ENCODE measurements at regions of chrX and their contacts with region 1.

Region 1: GRCh38 chrX:71128915-71129765 is 10.7 kb downstream of the MED12 start:
- DNase-seq: peak; percentile 79
- H3K4me3 ChIP-seq: peak overlapping the region in 1 of 2 experiments; percentile 29; a peak in 1 of 4 replicates
- H3K27ac ChIP-seq: peak overlapping the region in 1 of 2 experiments; percentile 37; a peak in 2 of 4 replicates
- H3K4me1 ChIP-seq: peaks cover 0 to 4% of the 10 kb centered on the region in 2 experiments; a peak in 1 of 4 replicates
- H3K27me3 ChIP-seq: peaks cover 5% of the 10 kb centered on the region; the same call in 1 of the 2 replicates
- CTCF ChIP-seq: peak; percentile 90
- EP300 ChIP-seq: no peak
- RAD21 ChIP-seq: peak; percentile 77

Region 2: DNA sequence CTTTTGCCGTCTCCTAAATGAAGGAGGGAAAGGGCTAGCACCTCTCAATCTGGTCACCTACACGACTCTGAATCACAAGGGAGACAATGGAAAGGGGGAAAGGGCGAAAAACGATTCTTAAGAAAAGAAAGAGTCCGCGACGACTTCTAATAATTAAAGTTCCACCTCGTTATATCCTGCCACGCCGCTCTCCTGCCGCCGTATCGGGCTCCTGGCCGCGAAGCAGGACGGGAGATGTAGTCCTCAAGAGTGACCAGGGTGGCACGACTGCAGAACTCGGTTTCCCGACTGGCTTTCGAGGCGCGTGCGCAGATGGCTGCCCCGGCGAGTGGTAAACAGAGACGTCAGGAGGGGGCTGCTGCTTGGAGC is 33.6 kb before region 1 on chrX and contains the start of gene FOXO4:
- CTCF ChIA-PET with region 1: interaction called, 30 read pairs
- POLR2A ChIA-PET with region 1: no interaction called
- DNase-seq: peak; percentile 91
- H3K4me3 ChIP-seq: peak within 1 kb of the TSS; percentile 69 to 77
- H3K27ac ChIP-seq: peak within 1 kb of the TSS in 1 of 2 experiments; percentile 17; a peak in 1 of 4 replicates
- H3K4me1 ChIP-seq: peaks cover 0 to 16% of the 10 kb centered on the region in 2 experiments; a peak in 1 of 4 replicates
- H3K27me3 ChIP-seq: peaks cover 5% of the 10 kb centered on the region; the same call in 1 of the 2 replicates
- CTCF ChIP-seq: no peak
- EP300 ChIP-seq: no peak
- RAD21 ChIP-seq: no peak
- polyA plus RNA-seq, gene FOXO4: 1.9 TPM in 2 replicates

Region 3: DNA sequence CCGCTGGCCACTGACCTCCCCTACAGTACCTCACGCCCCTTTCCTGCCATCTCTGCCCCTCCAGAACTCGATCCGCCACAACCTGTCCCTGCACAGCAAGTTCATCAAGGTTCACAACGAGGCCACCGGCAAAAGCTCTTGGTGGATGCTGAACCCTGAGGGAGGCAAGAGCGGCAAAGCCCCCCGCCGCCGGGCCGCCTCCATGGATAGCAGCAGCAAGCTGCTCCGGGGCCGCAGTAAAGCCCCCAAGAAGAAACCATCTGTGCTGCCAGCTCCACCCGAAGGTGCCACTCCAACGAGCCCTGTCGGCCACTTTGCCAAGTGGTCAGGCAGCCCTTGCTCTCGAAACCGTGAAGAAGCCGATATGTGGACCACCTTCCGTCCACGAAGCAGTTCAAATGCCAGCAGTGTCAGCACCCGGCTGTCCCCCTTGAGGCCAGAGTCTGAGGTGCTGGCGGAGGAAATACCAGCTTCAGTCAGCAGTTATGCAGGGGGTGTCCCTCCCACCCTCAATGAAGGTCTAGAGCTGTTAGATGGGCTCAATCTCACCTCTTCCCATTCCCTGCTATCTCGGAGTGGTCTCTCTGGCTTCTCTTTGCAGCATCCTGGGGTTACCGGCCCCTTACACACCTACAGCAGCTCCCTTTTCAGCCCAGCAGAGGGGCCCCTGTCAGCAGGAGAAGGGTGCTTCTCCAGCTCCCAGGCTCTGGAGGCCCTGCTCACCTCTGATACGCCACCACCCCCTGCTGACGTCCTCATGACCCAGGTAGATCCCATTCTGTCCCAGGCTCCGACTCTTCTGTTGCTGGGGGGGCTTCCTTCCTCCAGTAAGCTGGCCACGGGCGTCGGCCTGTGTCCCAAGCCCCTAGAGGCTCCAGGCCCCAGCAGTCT is 28.3 kb before region 1 on chrX:
- CTCF ChIA-PET with region 1: interaction called, 30 read pairs
- POLR2A ChIA-PET with region 1: no interaction called
- DNase-seq: no peak
- H3K4me3 ChIP-seq: no peak overlapping the region
- H3K27ac ChIP-seq: no peak overlapping the region
- H3K4me1 ChIP-seq: peaks cover 0 to 40% of the 10 kb centered on the region in 2 experiments; a peak in 1 of 4 replicates
- H3K27me3 ChIP-seq: peaks cover 5% of the 10 kb centered on the region; the same call in 1 of the 2 replicates
- CTCF ChIP-seq: peak; percentile 18; the same call in 1 of the 2 replicates
- EP300 ChIP-seq: no peak
- RAD21 ChIP-seq: no peak

Region 4: DNA sequence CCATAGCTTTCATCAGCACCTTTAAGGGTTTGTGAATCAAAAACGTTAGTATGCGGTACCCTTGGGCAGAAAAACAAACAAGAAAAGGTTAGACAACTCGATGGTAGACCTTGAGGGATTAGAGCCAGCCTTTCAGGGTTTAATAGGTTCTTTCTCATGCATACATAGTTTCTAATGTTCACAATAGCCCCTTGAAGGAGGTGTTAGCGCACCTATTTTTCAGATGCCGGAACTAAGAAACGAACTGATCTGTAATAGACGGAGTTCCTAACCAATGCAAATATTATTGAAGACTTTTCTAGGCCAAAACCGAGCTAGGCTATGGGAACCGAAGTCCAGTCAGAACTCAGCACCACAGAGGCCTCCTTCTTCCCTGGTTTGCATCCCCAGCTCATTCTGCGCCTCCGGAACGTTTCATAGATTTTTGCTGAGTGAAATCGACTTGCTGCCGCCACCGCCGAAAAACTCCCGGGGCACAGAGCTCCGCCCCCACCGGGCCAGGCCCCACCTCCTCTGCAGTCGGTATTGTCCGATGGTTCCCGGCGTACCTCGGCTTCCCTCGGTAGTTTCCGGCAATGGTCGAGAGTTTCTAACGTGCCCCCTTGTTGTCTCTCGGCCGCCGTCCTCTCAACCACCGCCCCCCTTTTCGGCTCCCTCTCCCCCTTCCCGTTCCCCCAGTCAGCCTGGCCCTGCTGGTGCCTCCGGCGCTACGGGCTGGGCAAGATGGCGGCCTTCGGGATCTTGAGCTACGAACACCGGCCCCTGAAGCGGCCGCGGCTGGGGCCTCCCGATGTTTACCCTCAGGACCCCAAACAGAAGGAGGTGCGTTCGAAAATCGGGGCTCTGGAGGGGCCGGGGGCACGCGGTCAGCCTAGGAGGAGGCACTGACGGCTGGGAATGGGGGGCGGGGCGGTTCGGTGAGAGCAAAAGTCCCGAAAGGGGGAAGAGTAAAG is 10.8 kb before region 1 on chrX and contains the start of gene MED12:
- CTCF ChIA-PET with region 1: interaction called, 27 read pairs
- POLR2A ChIA-PET with region 1: interaction called, 3 read pairs
- DNase-seq: peak; percentile 88
- H3K4me3 ChIP-seq: peak within 1 kb of the TSS; percentile 62 to 70
- H3K27ac ChIP-seq: peak within 1 kb of the TSS; percentile 53 to 62; a peak in 3 of 4 replicates
- H3K4me1 ChIP-seq: peaks cover 0 to 8% of the 10 kb centered on the region in 2 experiments; a peak in 1 of 4 replicates
- H3K27me3 ChIP-seq: no peaks in the 10 kb centered on the region; the same call in 1 of the 2 replicates
- CTCF ChIP-seq: no peak
- EP300 ChIP-seq: no peak
- RAD21 ChIP-seq: no peak
- polyA plus RNA-seq, gene MED12: 11.3 and 18.5 TPM in 2 replicates

Region 5: GRCh38 chrX:71139046-71139756 is 10.1 kb after region 1 on chrX:
- CTCF ChIA-PET with region 1: interaction called, 18 read pairs
- POLR2A ChIA-PET with region 1: no interaction called
- DNase-seq: no peak
- H3K4me3 ChIP-seq: no peak overlapping the region
- H3K27ac ChIP-seq: no peak overlapping the region
- H3K4me1 ChIP-seq: peaks cover 0 to under 1% of the 10 kb centered on the region in 2 experiments; a peak in 1 of 4 replicates
- H3K27me3 ChIP-seq: no peaks in the 10 kb centered on the region
- CTCF ChIP-seq: no peak
- EP300 ChIP-seq: no peak
- RAD21 ChIP-seq: no peak